Activated CD4-positive, alpha-beta T cell treated with anti-CD3 and anti-CD28 coated beads, Interleukin-2, amount 10 ng/mL, durations not matched to agents 24 days and 14 days (primary cell): ENCODE measurements at regions of chr5 and their contacts with region 1.

Region 1: GRCh38 chr5:16616536-16617273 is at the start of gene RETREG1:
- DNase-seq: peak; percentile 95
- H3K4me3 Mint-ChIP-seq: no peak within 1 kb of the TSS
- H3K27ac Mint-ChIP-seq: peak within 1 kb of the TSS; percentile 97
- H3K4me1 Mint-ChIP-seq: peaks cover 39% of the 10 kb centered on the region
- H3K27me3 Mint-ChIP-seq: no peaks in the 10 kb centered on the region
- total RNA-seq, gene RETREG1: 21.1 and 21.5 TPM in 2 replicates

Region 2: GRCh38 chr5:16727755-16728325 is 111.1 kb after region 1 on chr5:
- intact Hi-C with region 1: no loop called
- DNase-seq: no peak
- H3K4me3 Mint-ChIP-seq: no peak overlapping the region
- H3K27ac Mint-ChIP-seq: no peak overlapping the region
- H3K4me1 Mint-ChIP-seq: peaks cover 8% of the 10 kb centered on the region
- H3K27me3 Mint-ChIP-seq: no peaks in the 10 kb centered on the region

Region 3: DNA sequence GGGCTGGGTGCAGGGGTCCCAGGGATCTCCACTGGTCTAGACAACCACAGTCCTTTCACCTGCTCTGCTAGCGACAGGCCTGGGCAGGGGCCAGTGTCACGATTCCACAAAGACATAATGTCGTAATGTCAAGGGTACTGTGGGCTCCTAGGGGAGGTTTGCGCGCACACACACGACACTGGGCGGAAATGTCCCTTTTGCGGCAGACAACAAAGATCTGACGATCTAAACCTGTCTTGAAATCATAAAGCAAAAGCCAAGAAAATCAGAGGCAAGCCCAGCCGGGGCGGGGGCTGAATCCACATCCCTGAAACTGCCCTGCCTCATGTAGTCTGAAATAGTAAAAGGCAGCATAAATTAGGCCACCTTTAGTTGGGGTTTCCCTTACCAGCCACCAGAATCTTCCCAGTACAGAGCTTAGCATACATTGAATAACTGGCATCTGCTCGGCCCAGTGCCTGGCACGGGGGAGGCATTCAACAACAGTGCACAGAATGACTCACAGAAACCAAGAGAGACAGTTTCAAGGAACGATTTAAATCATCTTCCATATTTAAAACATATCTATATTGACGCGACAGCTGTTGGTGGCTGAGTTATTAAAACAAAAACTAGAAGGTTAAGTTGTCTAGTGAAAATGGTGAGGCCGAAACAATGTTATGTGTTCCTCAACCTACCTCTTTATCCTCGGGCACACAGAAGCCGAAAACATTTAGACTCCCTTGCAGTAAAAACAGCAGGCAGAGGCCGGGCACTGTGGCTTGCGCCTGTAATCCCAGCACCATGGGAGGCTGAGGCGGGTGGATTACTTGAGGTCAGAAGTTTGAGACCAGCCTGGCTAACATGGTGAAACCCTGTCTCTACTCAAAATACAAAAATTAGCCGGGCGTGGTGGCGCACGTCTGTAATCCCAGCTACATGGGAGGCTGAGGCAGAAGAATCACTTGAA is 168.4 kb after region 1 on chr5:
- intact Hi-C with region 1: loop called (anchors 2 kb)
- DNase-seq: no peak
- H3K4me3 Mint-ChIP-seq: no peak overlapping the region
- H3K27ac Mint-ChIP-seq: no peak overlapping the region
- H3K4me1 Mint-ChIP-seq: peaks cover 4% of the 10 kb centered on the region
- H3K27me3 Mint-ChIP-seq: no peaks in the 10 kb centered on the region